Activated CD8-positive, alpha-beta T cell treated with anti-CD3 and anti-CD28 coated beads for 36 hours (primary cell): ENCODE measurements at regions of chr13 and their contacts with region 1.

Region 1: DNA sequence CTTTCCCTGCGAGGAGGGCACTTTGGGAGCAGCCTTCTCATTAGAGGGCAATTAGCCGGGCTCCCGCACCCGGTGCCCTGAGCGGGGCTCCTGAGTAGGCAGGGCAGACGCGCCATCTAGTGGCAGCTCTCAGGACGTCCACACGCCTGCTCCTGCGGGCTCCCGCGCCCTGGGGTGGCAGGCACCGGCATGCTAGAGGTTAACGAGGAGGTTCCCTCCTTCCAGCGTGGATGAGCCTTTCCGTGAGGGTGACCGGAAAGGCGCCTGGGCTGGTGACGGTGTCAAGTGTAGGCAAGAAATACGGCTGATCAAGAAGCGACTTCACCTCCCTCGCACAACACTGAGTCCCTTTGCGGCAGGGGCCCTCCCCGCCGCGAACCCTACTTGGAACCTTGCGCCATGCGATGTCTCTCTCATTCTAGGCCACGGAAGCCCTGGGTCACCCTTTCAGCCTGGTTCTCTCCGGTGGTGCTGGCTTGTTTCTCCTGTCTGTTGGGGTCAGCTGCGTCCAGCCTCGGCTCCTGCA is 67.7 kb downstream of the ALOX5AP start:
- DNase-seq: peak; percentile 88
- ATAC-seq: peak; percentile 99
- H3K4me3 Mint-ChIP-seq: peak overlapping the region; percentile 43
- H3K27ac Mint-ChIP-seq: no peak overlapping the region
- H3K4me1 Mint-ChIP-seq: peaks cover 9% of the 10 kb centered on the region
- H3K27me3 Mint-ChIP-seq: no peaks in the 10 kb centered on the region
- CTCF ChIP-seq: peak; percentile 98

Region 2: GRCh38 chr13:30617315-30618185 is 185.5 kb before region 1 on chr13 and contains the start of gene USPL1:
- CTCF ChIA-PET with region 1: no interaction called
- POLR2A ChIA-PET with region 1: interaction called, 3 read pairs
- intact Hi-C with region 1: loop called (anchors 2 kb)
- DNase-seq: peak; percentile 98
- ATAC-seq: peak; percentile 90
- H3K4me3 Mint-ChIP-seq: no peak within 1 kb of the TSS
- H3K27ac Mint-ChIP-seq: no peak within 1 kb of the TSS
- H3K4me1 Mint-ChIP-seq: peaks cover 23% of the 10 kb centered on the region
- H3K27me3 Mint-ChIP-seq: no peaks in the 10 kb centered on the region
- CTCF ChIP-seq: no peak
- total RNA-seq, gene USPL1: 12.4 to 13.0 TPM

Region 3: GRCh38 chr13:30679483-30680330 is 123.3 kb before region 1 on chr13:
- CTCF ChIA-PET with region 1: interaction called, 3 read pairs
- POLR2A ChIA-PET with region 1: no interaction called
- intact Hi-C with region 1: loop called (anchors 2 kb)
- DNase-seq: peak; percentile 46
- ATAC-seq: peak; percentile 94
- H3K4me3 Mint-ChIP-seq: no peak overlapping the region
- H3K27ac Mint-ChIP-seq: no peak overlapping the region
- H3K4me1 Mint-ChIP-seq: peaks cover 9% of the 10 kb centered on the region
- H3K27me3 Mint-ChIP-seq: peaks cover 4% of the 10 kb centered on the region
- CTCF ChIP-seq: peak; percentile 52

Region 4: GRCh38 chr13:30774214-30774730 is 28.7 kb before region 1 on chr13:
- CTCF ChIA-PET with region 1: no interaction called
- POLR2A ChIA-PET with region 1: no interaction called
- intact Hi-C with region 1: no loop called
- DNase-seq: peak; percentile 20
- ATAC-seq: peak; percentile 86
- H3K4me3 Mint-ChIP-seq: peak overlapping the region; percentile 16
- H3K27ac Mint-ChIP-seq: peak overlapping the region; percentile 81
- H3K4me1 Mint-ChIP-seq: peaks cover 21% of the 10 kb centered on the region
- H3K27me3 Mint-ChIP-seq: no peaks in the 10 kb centered on the region
- CTCF ChIP-seq: no peak